A673 (cell line): ENCODE measurements at regions of chr1 and their contacts with region 1.

Region 1: GRCh38 chr1:64136752-64137411 is 66.5 kb upstream of the UBE2U start:
- DNase-seq: peak; percentile 92
- H3K4me3 ChIP-seq: no peak overlapping the region
- H3K27ac ChIP-seq: no peak overlapping the region
- H3K4me1 ChIP-seq: peaks cover 27% of the 10 kb centered on the region
- H3K27me3 ChIP-seq: no peaks in the 10 kb centered on the region
- CTCF ChIP-seq: peak; percentile 96

Region 2: DNA sequence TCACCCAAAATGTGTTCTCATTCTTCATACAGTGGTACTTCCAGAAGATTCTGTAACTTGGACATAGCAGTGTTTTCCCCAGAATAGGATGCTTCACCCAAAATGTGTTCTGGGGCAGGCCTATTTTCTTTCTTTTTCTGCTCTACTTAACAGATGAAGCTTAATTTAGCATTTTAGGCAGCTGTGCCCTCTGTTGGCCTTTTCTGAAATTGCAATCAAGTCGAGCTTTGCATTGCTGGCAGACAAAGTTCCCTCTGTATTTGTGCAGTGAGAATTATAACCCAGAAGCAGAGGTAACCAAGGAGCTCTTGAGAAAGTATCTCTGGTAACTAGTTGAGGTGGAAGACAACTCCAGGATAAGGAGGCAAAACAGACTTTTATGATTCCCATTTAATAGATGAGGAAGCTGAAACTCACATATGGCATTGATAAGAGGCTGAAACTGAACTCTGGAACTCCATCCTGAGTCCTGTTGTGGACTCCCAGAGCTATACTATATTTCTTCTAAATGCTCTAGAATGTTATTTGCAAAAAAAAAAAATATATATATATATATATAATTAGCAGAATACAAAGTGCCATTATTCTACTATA is 1992.5 kb before region 1 on chr1:
- CTCF ChIA-PET with region 1: no interaction called
- POLR2A ChIA-PET with region 1: interaction called, 16 read pairs
- intact Hi-C with region 1: no loop called
- DNase-seq: peak; percentile 77
- H3K4me3 ChIP-seq: no peak overlapping the region
- H3K27ac ChIP-seq: no peak overlapping the region
- H3K4me1 ChIP-seq: no peaks in the 10 kb centered on the region
- H3K27me3 ChIP-seq: no peaks in the 10 kb centered on the region
- CTCF ChIP-seq: peak; percentile 78

Region 3: GRCh38 chr1:63615768-63616420 is 521.0 kb before region 1 on chr1:
- CTCF ChIA-PET with region 1: no interaction called
- POLR2A ChIA-PET with region 1: no interaction called
- intact Hi-C with region 1: loop called (anchors 5 kb)
- DNase-seq: peak; percentile 81
- H3K4me3 ChIP-seq: no peak overlapping the region
- H3K27ac ChIP-seq: no peak overlapping the region
- H3K4me1 ChIP-seq: no peaks in the 10 kb centered on the region
- H3K27me3 ChIP-seq: no peaks in the 10 kb centered on the region
- CTCF ChIP-seq: peak; percentile 73

Region 4: GRCh38 chr1:63773815-63774616 is 362.9 kb before region 1 on chr1 and contains the start of gene ROR1:
- CTCF ChIA-PET with region 1: no interaction called
- POLR2A ChIA-PET with region 1: no interaction called
- intact Hi-C with region 1: loop called (anchors 10 kb)
- DNase-seq: peak; percentile 93
- H3K4me3 ChIP-seq: peak within 1 kb of the TSS; percentile 80
- H3K27ac ChIP-seq: peak within 1 kb of the TSS; percentile 52
- H3K4me1 ChIP-seq: peaks cover 15% of the 10 kb centered on the region
- H3K27me3 ChIP-seq: no peaks in the 10 kb centered on the region
- CTCF ChIP-seq: peak; percentile 83
- total RNA-seq, gene ROR1: 7.4 and 8.3 TPM in 2 replicates

Region 5: DNA sequence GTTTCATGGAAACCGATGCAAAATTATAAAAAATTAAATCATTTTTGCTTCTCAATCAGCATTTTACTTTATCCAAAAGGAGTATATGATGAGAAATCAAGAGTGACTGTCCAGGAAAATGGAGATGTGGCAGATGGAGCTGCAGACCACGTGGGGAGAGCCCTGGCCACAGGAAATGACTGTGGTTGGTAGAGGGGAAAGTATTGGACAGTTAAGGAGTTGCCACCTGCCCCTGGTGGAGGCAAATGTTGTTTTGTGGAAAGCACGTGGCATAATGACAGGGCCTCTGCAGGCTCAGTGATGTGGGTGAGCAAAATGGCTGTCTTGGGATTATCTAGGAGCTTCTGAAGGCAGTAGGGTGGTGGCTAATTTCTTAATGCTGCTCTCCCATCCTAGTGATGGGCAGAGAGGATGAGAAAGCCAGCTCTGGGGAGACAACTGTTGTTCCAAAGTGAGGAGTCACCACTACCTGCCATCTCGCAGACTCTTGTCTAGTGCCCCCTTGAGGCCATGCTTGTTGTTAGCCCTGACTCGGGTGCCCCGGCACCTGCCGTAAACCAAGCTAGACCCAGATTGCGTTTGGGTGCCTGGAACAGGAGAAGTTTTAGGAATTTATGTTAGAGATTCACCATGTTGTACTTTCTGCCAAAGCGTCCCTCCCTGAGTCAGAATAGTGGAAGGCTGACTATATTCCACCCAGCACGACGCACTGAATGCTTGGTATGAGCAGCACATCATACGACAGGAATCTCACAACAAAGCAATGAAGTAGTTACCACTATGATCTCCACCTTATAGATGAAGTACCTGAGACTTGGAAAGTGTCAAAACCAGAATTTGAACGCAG is 219.1 kb before region 1 on chr1:
- CTCF ChIA-PET with region 1: no interaction called
- POLR2A ChIA-PET with region 1: no interaction called
- intact Hi-C with region 1: loop called (anchors 2 kb)
- DNase-seq: peak; percentile 50
- H3K4me3 ChIP-seq: no peak overlapping the region
- H3K27ac ChIP-seq: no peak overlapping the region
- H3K4me1 ChIP-seq: peaks cover 20% of the 10 kb centered on the region
- H3K27me3 ChIP-seq: no peaks in the 10 kb centered on the region
- CTCF ChIP-seq: peak; percentile 64

Region 6: DNA sequence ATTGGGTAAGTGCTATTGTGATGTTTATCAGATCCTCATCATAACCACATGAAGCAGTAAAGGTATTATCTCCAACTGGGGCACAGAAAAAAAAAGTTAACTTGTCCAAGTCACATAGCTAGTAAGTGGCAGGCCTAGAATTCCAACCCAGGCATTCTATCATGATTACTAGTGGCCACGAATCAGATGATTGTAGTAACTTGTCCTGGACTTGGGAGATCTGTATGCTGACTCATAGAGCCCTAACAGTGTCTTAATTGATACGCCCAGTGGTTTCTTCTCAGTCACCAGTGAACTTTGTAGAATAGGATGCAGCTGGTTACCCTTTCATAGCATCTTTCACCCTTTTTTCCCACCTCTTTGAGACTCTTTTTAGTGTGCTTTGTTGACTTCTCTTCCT is 24.6 kb before region 1 on chr1:
- CTCF ChIA-PET with region 1: no interaction called
- POLR2A ChIA-PET with region 1: interaction called, 14 read pairs
- intact Hi-C with region 1: no loop called
- DNase-seq: no peak
- H3K4me3 ChIP-seq: no peak overlapping the region
- H3K27ac ChIP-seq: no peak overlapping the region
- H3K4me1 ChIP-seq: no peaks in the 10 kb centered on the region
- H3K27me3 ChIP-seq: no peaks in the 10 kb centered on the region
- CTCF ChIP-seq: no peak

Region 7: GRCh38 chr1:64242895-64243756 is 106.2 kb after region 1 on chr1:
- CTCF ChIA-PET with region 1: no interaction called
- POLR2A ChIA-PET with region 1: no interaction called
- intact Hi-C with region 1: loop called (anchors 2 kb)
- DNase-seq: peak; percentile 75
- H3K4me3 ChIP-seq: peak overlapping the region; percentile 16
- H3K27ac ChIP-seq: peak overlapping the region; percentile 72
- H3K4me1 ChIP-seq: peaks cover 48% of the 10 kb centered on the region
- H3K27me3 ChIP-seq: no peaks in the 10 kb centered on the region
- CTCF ChIP-seq: peak; percentile 72